Motor neuron (in vitro differentiated cells): ENCODE measurements at regions of chr10 and their contacts with region 1.

Region 1: DNA sequence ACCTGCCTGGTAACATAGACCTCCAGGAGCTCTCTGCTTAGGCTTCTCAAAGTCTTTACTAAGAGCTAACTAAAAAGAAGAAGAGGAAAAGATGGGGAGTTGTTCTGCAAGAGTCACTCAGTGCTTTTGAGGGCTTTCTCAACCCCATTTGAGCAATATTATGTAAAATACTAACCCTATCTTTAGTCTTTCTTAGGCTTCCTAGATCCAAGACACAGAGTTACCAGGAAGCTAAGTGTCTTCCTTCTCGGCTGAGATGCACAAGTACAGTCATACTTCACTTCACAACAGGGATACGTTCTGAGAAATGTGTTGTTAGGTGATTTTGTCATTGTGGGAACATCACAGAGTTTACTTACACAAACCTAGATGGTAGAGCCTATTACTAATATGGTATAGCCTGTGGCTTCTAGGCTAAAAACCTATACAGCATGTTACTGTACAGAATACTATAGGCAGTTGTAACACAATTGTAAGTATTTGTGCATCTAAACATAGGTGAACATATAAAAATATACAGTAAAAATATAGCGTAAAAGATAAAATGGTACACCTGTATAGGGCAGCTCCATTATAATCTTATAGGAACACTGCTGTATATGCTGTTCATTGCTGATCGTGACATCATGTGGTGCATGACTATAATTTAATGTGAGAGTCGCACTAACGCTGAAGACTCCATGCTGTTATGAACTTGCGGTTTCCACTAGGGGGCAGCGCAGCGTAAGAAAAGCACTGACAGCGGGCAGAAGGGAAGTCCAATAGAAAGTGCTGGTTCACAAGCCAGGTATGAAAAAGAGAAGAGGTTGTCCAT is 16.3 kb downstream of the ANKRD22 start:
- ATAC-seq: peak; percentile 92 to 100 (median 98)
- H3K4me3 ChIP-seq: no peak overlapping the region
- H3K27ac ChIP-seq: no peak overlapping the region
- H3K4me1 ChIP-seq: peaks cover 0 to 2% of the 10 kb centered on the region in 2 donors

Region 2: DNA sequence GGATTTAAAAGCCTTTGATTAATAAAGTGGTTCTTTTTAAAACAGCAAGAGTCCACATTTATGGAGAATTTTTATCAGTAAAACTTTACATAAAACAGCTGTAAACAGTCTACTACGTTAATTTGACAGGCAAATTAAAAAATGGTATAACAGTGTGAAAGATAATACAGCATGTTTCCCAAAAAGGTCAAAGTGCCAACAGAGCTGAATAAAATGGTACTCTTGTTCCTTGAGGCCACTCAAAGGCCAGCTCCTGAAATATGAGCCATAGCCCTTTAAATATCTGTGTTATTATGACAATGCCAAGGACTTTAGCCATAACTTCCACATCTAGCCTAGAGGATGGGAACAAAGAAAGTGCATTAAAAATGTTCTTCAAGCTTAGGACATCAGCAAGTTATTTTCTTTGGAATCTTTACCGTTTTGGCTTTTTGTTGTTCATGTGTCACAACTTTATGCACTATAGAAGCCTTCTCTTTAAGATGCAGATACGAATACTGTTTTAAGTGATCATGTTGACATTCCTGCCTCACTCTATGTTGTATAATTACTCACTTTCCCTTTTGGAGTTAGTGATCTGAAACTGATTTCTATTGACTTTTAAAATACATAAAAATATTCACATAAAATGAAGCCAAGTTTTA is 417.8 kb before region 1 on chr10:
- in situ Hi-C with region 1: no loop called
- ATAC-seq: no peak
- H3K4me3 ChIP-seq: no peak overlapping the region
- H3K27ac ChIP-seq: no peak overlapping the region
- H3K4me1 ChIP-seq: no peaks in the 10 kb centered on the region

Region 3: GRCh38 chr10:88926566-88927415 is 91.5 kb after region 1 on chr10:
- in situ Hi-C with region 1: loop called in 8 of 9 experiments (anchors 10 to 25 kb)
- ATAC-seq: peak in 6 of 8 experiments; percentile 46 to 90 (median 75)
- H3K4me3 ChIP-seq: no peak overlapping the region
- H3K27ac ChIP-seq: peak overlapping the region in 1 of 2 donors; percentile 13
- H3K4me1 ChIP-seq: peaks cover 9 to 12% of the 10 kb centered on the region in 2 donors

Region 4: GRCh38 chr10:88932539-88933256 is 97.4 kb after region 1 on chr10:
- in situ Hi-C with region 1: loop called in 8 of 9 experiments (anchors 10 to 25 kb)
- ATAC-seq: peak; percentile 86 to 98 (median 92)
- H3K4me3 ChIP-seq: no peak overlapping the region
- H3K27ac ChIP-seq: no peak overlapping the region
- H3K4me1 ChIP-seq: peaks cover 0 to 2% of the 10 kb centered on the region in 2 donors

Region 5: GRCh38 chr10:89217057-89217990 is 382.0 kb after region 1 on chr10:
- in situ Hi-C with region 1: loop called in 3 of 9 experiments (anchors 25 kb)
- ATAC-seq: peak in 4 of 8 experiments; percentile 28 to 49 (median 36)
- H3K4me3 ChIP-seq: no peak overlapping the region
- H3K27ac ChIP-seq: no peak overlapping the region
- H3K4me1 ChIP-seq: peaks cover 0 to 3% of the 10 kb centered on the region in 2 donors

Region 6: DNA sequence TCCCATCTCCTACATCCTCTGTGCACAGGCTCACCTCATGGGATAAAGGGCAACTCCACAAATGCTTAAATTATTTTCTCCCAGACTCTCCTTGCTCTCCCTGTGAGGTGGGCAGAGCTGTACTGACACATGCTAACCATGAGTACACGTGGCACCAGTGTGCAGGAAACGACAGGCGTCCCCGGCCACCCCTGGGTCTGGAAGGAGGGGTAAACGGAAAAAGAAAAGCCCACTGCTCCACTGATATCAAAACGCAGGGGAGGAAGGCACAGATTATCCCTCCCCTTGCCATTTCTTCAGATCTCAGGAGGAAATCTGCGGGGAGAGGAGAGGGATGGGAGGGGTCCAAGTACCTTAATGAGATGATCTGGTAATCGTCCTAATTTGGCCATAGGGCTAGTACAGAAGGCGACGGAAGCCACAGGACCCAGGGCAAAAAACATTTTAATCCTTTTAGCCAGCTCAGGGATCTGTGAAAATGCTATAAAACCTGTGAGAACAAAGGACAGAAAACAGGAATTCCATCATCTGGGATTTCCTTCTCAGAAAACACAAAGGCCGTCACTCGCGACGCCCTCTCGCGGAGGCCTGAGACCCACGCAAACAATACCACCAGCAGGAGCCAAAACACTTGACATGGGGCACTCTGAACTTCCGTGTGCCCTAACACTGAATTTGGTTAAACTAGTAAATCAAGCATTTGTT is 389.6 kb after region 1 on chr10:
- in situ Hi-C with region 1: loop called in 4 of 9 experiments (anchors 25 kb)
- ATAC-seq: no peak
- H3K4me3 ChIP-seq: no peak overlapping the region
- H3K27ac ChIP-seq: no peak overlapping the region
- H3K4me1 ChIP-seq: no peaks in the 10 kb centered on the region